ENCODE measurements at regions of chr2 and their contacts with region 1.

Region 1: GRCh38 chr2:236512902-236513435 is 56.7 kb upstream of the ACKR3 start:
- DNase-seq: peak in 9 of 10 donors; percentile 46 to 94 (median 61)

Region 2: DNA sequence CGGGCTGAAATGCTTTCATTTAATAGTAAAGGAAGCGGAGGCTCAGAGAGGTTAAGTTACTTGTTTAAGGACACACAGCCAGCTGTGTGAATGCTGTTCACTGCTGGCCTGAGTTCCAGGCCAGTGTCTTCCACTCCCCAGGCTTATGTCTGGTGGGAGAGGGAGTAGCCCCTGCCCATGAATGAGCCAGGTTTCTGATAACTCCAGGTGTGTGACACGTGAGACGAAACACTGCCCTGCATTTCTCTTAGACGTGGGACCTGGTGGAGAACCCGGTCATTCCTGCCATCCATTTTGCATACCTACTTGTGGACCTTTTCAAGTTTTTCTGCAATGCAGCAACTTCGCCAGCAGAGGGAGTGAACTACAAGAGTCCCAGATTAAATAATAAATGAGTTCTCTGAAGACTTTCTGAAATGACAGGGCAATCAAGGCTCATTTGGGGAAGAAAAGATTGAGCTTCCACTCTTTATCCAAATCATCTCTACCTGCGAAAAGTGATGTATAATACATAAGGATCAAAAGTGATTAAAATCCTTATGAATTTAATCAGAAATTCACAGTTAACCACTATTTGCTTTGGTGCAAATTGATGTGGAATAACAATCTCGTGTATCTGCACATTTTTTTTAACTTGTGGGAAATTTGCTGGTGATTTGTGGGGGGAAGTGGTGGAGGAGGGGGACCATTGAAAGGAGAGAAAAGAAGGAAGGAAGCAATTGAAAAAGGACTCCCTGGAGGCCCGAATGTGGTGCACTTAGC is 169.4 kb before region 1 on chr2:
- intact Hi-C with region 1: loop called (anchors 10 kb)
- DNase-seq: peak in 5 of 10 donors; percentile 44 to 60 (median 55)

Region 3: GRCh38 chr2:236369661-236370062 is 143.3 kb before region 1 on chr2:
- intact Hi-C with region 1: no loop called
- DNase-seq: peak in 3 of 10 donors; percentile 58 to 87 (median 84)

Region 4: DNA sequence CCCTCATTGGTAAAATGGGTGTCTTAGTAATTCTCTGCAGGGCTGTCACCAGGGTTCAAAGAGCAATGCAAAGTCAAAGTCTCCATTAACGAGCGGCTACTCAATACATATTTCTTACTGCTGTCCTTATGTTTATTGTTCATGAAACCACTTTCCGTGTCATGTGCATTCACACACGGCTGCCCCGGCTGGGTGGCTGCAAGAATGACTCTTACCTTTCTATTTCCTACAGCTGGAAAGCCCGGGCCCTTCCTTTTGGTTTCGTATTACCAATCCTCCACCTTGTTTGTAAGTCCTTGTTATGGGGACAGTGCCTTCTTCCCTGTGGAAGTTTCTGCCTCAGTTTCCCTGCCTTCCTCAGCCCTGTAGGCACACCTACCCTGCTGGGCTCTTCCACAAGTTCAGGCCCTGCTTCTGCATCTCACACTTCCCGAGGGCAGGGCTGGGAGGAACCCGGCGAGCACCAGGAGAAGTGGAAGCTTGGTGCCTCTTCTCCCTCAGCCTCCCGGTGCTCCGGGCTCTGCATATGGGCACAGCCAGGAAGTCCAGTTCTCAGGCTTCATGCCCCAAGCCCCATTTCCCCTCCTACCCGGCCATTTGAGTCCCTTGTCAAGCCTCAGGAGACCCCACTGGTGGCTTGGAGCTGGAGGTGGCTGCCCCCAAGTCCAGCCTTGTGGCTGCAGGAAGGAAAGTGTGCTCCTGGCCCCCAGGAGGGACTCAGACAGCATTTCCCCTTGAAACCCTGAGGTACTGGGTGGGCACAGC is 37.9 kb after region 1 on chr2:
- intact Hi-C with region 1: no loop called
- DNase-seq: no peak

Region 5: GRCh38 chr2:236569573-236569973 is 56.6 kb after region 1 on chr2 and contains the start of gene ACKR3:
- intact Hi-C with region 1: loop called (anchors 2 kb)
- DNase-seq: peak; percentile 53 to 95 (median 74)

Region 6: DNA sequence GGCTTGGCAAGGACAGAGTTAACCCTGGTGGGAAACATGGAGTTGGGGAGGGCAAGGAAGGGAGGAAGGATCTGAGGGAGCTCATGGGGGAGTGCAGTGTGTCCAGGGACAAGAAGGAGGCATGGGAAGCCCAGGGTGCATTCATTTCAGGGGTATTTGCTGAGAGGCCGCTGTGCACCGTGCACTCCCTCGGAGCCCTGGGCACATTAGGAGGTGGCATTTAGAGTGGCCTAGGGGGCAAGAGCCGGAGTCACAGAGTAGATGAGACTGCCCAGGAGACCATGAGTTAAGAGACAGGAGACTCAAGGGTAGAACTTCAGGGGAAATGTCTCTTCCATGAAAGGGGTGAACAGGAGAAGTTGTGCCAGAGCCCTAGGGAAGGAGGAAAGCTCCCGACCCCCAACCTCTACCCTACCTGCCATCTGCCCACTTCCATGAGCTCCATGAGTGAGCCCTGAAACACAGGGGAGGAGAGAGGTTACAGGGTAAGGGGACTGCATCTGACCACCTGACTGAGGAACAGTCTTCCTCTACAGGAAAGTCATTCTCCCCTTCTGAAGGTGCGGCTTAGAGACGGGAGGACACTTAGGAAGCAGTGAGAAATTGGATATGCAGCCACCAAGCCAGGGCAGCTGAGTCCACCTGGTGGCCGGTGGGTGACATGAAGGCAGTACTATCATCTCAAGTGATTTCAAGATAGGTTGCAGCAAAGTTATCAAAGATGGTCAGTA is 514.2 kb after region 1 on chr2:
- intact Hi-C with region 1: loop called (anchors 10 kb)
- DNase-seq: peak; percentile 49 to 95 (median 70)

Region 7: DNA sequence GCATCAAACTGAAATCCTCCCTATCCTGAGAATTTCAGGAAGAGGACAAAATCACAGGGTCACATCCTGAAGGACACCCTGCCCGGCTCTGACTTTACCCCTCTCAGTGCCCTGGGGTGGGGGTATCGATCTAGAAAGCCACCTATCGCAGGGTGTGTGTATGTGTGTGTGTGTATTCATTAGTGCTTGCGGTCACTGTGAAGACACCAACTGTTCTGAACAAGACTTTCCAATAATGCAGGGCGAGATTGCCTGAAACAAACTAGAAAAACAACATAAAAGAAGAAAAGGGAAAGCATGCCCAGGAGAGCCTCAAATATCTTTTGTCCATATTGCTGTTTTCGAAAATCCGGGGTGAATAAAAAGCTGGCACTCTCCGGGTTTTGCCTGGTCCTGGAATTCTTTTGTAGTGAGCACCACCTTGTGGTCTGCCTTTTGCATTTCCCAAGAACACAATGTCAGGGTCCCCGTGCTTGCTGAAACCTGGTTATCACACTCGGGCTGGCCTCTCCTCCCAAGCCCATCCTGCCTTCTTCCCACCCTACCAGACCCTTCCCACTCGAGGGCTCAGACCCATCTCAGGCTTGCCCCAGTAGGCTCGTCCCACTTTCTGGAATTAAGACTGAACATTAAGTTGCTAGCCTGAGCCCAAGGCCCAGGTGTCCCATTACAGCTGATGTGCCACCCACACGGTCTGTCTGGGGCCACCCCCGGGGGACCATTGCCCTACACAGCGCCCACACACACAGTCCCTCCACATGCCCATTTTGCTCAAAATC is 547.8 kb after region 1 on chr2:
- intact Hi-C with region 1: loop called (anchors 2 kb)
- DNase-seq: peak in 7 of 10 donors; percentile 24 to 84 (median 48)

Measured in posterior cingulate gyrus (tissue), 11 donors.